ENCODE measurements at regions of chr7 and their contacts with region 1.

Region 1: DNA sequence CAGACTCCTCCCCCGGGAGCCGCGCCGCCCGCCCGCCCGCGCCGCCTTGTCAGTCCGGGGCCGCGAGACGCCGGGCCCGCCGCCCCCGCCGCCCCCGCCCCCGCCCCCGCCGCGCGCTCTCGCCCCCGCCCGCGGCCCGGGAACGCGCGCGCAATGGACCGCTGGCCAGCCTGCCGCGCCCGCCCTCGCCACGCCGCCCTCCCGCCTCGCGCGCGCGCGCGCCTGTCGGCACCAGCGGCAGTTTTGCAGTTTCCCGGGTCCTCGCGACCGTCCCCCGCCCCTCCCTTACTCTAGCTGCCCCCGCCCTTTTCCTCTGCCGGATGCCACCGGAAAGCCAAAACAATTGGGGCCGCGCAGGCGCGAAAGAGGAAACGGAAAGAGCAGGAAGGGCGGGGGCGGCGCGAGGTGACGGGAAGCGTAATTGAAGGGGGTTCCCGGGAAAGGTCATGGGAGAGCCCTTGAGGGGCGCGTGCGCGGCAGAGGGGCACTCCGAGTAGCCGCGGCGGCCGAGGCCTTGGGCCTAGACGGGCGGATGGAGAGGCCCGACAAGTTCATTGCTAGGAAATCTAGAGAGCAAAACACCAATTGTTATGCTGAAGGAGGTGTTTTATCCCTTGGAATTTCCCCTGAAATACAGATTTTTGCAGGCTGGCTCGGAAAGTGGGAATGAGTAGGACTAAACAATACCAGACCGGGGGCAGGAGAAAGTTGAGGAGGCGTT is 400 bp upstream of the KBTBD2 start:
- DNase-seq: peak; percentile 97
- H3K4me3 Mint-ChIP-seq: peak overlapping the region; percentile 88
- H3K27ac Mint-ChIP-seq: peak overlapping the region; percentile 99
- H3K4me1 Mint-ChIP-seq: peaks cover 45% of the 10 kb centered on the region
- H3K27me3 Mint-ChIP-seq: no peaks in the 10 kb centered on the region

Region 2: DNA sequence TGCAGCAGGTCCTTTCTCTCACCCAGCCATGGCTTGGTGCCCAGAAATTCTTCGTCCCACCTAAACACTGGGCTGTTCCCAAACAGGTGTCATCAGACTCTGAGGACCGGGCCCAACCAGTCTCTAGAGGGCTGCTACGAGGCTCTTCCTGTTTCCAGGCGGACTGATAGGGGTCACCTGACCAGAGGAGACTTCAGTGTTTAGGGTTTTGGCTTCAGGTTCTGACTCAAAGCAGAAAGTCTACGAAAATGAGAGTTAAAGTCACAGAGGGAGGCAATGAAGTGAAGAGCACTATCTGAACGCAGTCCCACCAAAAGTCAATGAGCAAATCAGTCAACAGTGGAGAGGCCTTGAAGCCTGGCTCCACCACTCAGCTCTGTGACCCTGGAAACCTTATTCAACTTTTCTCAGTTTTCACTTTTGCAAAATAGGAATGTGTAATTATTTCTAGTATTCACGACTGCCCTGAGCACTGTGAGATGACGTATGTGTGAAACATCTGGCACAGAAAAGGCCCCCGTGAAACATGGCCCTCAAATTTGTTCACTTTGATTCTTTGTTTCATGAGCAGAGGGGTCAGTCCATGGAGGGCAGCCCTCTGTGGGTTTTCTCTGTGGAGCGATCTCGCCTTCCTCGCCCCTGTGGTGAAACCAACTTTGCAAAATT is 631.9 kb before region 1 on chr7:
- intact Hi-C with region 1: no loop called
- DNase-seq: no peak
- H3K4me3 Mint-ChIP-seq: no peak overlapping the region
- H3K27ac Mint-ChIP-seq: no peak overlapping the region
- H3K4me1 Mint-ChIP-seq: no peaks in the 10 kb centered on the region
- H3K27me3 Mint-ChIP-seq: peaks cover 5% of the 10 kb centered on the region

Region 3: GRCh38 chr7:32846701-32847100 is 45.3 kb before region 1 on chr7:
- intact Hi-C with region 1: loop called (anchors 1 kb)
- DNase-seq: peak; percentile 77
- H3K4me3 Mint-ChIP-seq: peak overlapping the region; percentile 14
- H3K27ac Mint-ChIP-seq: no peak overlapping the region
- H3K4me1 Mint-ChIP-seq: peaks cover 13% of the 10 kb centered on the region
- H3K27me3 Mint-ChIP-seq: peaks cover 26% of the 10 kb centered on the region

Region 4: GRCh38 chr7:32905175-32905662 is 13.3 kb after region 1 on chr7:
- intact Hi-C with region 1: loop called (anchors 1 kb)
- DNase-seq: peak; percentile 83
- H3K4me3 Mint-ChIP-seq: peak overlapping the region; percentile 72
- H3K27ac Mint-ChIP-seq: peak overlapping the region; percentile 95
- H3K4me1 Mint-ChIP-seq: peaks cover 7% of the 10 kb centered on the region
- H3K27me3 Mint-ChIP-seq: no peaks in the 10 kb centered on the region

Region 5: DNA sequence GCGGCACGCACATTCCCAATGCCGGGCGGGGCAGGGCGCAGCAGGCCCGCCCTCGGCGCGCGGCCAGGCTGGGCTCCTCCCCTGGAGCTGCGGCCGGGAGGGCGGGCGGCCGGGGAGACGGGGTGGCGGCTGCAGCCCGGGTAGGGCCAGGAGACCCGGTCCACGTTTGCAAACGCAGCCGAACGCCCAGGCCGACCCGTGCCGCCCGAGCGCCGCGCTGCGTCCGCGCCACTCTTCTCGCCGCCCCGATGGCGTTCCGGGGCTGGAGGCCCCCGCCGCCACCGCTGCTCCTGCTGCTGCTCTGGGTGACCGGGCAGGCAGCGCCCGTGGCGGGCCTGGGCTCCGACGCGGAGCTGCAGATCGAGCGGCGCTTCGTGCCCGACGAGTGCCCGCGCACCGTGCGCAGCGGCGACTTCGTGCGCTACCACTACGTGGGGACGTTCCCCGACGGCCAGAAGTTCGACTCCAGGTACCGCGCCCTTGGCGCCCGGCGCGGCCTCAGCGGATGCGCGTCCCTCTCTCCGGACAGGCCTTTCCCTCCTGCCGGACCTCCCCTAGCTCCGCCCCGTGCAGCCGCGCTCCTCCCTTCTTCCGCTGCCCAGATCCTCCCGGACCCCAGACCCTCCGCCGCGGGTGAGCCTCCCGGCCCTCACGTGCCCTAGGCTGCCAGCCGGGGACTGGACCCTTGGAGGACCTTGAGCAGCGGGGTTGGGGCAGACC is 65.5 kb after region 1 on chr7 and contains the start of gene FKBP9:
- intact Hi-C with region 1: no loop called
- DNase-seq: peak; percentile 14
- H3K4me3 Mint-ChIP-seq: peak within 1 kb of the TSS; percentile 83
- H3K27ac Mint-ChIP-seq: no peak within 1 kb of the TSS
- H3K4me1 Mint-ChIP-seq: peaks cover 4% of the 10 kb centered on the region
- H3K27me3 Mint-ChIP-seq: peaks cover 24% of the 10 kb centered on the region
- total RNA-seq, gene FKBP9: 3.0 and 3.5 TPM in 2 replicates

Region 6: DNA sequence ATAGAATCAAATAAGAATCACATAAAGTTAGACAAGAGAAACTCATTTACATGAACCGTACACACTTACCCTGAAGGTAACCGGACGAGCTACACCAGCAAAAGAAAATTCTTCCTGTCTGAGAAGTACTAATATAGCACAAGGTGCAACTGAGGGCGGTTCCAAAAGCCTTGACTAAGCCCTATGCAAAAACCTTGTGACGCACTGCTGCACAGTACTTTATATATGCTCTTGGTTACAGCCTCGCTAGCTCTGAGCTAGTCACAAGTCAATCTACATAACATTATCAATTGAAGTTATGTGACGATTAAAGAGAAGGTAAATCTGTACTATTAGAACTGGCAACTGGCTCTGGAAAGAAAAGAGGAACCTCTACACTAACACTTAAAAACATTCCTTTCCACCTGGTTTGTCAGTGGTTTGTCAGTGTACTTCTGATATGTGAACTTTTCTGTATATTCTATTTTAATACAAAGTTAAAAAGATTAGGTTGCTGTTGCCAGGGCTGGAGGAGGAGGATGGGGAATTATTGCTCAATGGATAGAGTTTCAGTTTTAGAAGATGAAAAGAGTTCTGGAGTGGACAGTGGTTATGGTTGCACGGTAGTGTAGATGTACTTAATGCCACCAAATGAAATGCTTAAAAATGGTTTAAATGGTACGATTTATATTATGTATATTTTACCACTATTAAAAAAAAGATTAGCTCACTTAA is 149.0 kb after region 1 on chr7:
- intact Hi-C with region 1: loop called (anchors 1 kb)
- DNase-seq: peak; percentile 62
- H3K4me3 Mint-ChIP-seq: peak overlapping the region; percentile 37
- H3K27ac Mint-ChIP-seq: peak overlapping the region; percentile 56
- H3K4me1 Mint-ChIP-seq: peaks cover 48% of the 10 kb centered on the region
- H3K27me3 Mint-ChIP-seq: no peaks in the 10 kb centered on the region

Region 7: GRCh38 chr7:33109005-33109757 is 217.2 kb after region 1 on chr7 and contains the start of gene RP9:
- intact Hi-C with region 1: loop called (anchors 1 kb)
- DNase-seq: peak; percentile 73
- H3K4me3 Mint-ChIP-seq: peak within 1 kb of the TSS; percentile 90
- H3K27ac Mint-ChIP-seq: peak within 1 kb of the TSS; percentile 65
- H3K4me1 Mint-ChIP-seq: peaks cover 23% of the 10 kb centered on the region
- H3K27me3 Mint-ChIP-seq: peaks cover 22% of the 10 kb centered on the region
- total RNA-seq, gene RP9: 15.4 and 18.6 TPM in 2 replicates

Measured in activated T-helper 2 cell treated with anti-CD3 and anti-CD28 coated beads, Interferon-gamma antibody, Interleukin-2, Interleukin-4, amounts not matched to agents 10 μg/mL and 5 μg/mL and 100 μg/mL, durations not matched to agents 14 hours and 24 hours and 36 hours (primary cell).